HEK293T (cell line): ENCODE measurements at regions of chr19 and their contacts with region 1.

Region 1: DNA sequence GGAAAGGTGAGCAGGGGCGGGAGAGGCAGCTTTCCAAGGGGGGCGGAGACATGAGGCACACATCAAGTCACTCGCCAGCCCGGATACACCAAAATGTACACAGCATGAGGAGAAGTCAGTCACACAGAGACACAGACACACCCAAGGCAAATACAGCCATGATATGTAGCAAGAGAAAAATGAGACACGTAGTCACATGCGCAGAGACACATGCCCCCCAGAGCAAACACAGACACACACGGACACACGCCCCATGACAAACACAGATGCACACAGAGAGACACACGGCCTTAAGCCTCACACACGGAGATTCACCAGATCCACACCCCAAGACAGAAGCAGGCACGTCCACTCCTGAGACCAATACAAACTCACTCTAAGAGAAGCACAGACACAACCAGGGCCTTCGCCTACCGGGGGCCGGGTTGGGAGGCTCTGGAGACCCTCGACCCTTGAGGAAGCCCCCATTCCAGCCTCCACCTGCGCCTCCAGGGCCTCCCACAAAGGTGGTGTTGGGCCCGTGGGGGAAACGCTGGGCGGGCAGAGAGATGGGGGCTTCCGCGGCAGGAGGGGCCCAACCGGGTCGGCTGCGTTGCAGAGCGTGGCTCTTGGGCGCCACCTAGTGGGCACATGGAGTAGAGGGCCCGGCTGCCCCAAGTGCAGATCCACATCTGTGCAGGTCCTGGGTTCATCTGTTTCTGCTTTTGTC is 10.2 kb upstream of the TINCR start:
- DNase-seq: peak; percentile 90

Region 2: GRCh38 chr19:5547881-5548280 is 30.1 kb before region 1 on chr19:
- CTCF ChIA-PET with region 1: interaction called, 10 read pairs
- POLR2A ChIA-PET with region 1: no interaction called
- DNase-seq: peak; percentile 70